ENCODE measurements at regions of chr1 and their contacts with region 1.

Region 1: GRCh38 chr1:81549604-81550127 is 251.1 kb upstream of the ADGRL2 start:
- DNase-seq: no peak
- ATAC-seq: peak; percentile 58 to 88 (median 70)
- H3K4me3 ChIP-seq: no peak overlapping the region
- H3K27ac ChIP-seq: no peak overlapping the region
- H3K4me1 ChIP-seq: peaks cover 0 to 20% (median 0%) of the 10 kb centered on the region in 12 donors
- H3K27me3 ChIP-seq: no peaks in the 10 kb centered on the region
- CTCF ChIP-seq: peak; percentile 28 to 64 (median 50)
- POLR2A ChIP-seq: no peak

Region 2: GRCh38 chr1:81305997-81306452 is 243.6 kb before region 1 on chr1:
- intact Hi-C with region 1: loop called in 2 of 10 experiments (anchors 5 to 10 kb)
- DNase-seq: peak in 3 of 5 donors; percentile 19 to 30 (median 25)
- ATAC-seq: peak; percentile 89 to 91 (median 90)
- H3K4me3 ChIP-seq: peak overlapping the region; percentile 33 to 76 (median 54)
- H3K27ac ChIP-seq: peak overlapping the region in 8 of 12 donors; percentile 11 to 71 (median 44)
- H3K4me1 ChIP-seq: peaks cover 0 to 9% (median 0%) of the 10 kb centered on the region in 12 donors
- H3K27me3 ChIP-seq: no peaks in the 10 kb centered on the region
- CTCF ChIP-seq: peak in 11 of 12 donors; percentile 18 to 69 (median 54)
- POLR2A ChIP-seq: no peak

Region 3: GRCh38 chr1:81437649-81438048 is 112.0 kb before region 1 on chr1:
- intact Hi-C with region 1: loop called in 2 of 10 experiments (anchors 10 kb)
- DNase-seq: no peak
- ATAC-seq: peak in 3 of 4 donors; percentile 23 to 47 (median 35)
- H3K4me3 ChIP-seq: peak overlapping the region in 1 of 12 donors; percentile 2
- H3K27ac ChIP-seq: peak overlapping the region in 9 of 12 donors; percentile 3 to 57 (median 37)
- H3K4me1 ChIP-seq: peaks cover 0 to 35% (median 15%) of the 10 kb centered on the region in 12 donors
- H3K27me3 ChIP-seq: no peaks in the 10 kb centered on the region
- CTCF ChIP-seq: no peak
- POLR2A ChIP-seq: no peak

Region 4: GRCh38 chr1:81606656-81607055 is 57.0 kb after region 1 on chr1:
- intact Hi-C with region 1: no loop called
- DNase-seq: no peak
- ATAC-seq: no peak
- H3K4me3 ChIP-seq: no peak overlapping the region
- H3K27ac ChIP-seq: no peak overlapping the region
- H3K4me1 ChIP-seq: no peaks in the 10 kb centered on the region
- H3K27me3 ChIP-seq: no peaks in the 10 kb centered on the region
- CTCF ChIP-seq: no peak
- POLR2A ChIP-seq: no peak

Region 5: GRCh38 chr1:81731989-81732388 is 182.3 kb after region 1 on chr1:
- intact Hi-C with region 1: loop called in 1 of 10 experiments (anchors 10 kb)
- DNase-seq: no peak
- ATAC-seq: peak in 3 of 4 donors; percentile 60 to 80 (median 64)
- H3K4me3 ChIP-seq: no peak overlapping the region
- H3K27ac ChIP-seq: no peak overlapping the region
- H3K4me1 ChIP-seq: peaks cover 0 to 6% (median 0%) of the 10 kb centered on the region in 12 donors
- H3K27me3 ChIP-seq: no peaks in the 10 kb centered on the region
- CTCF ChIP-seq: no peak
- POLR2A ChIP-seq: no peak

Region 6: DNA sequence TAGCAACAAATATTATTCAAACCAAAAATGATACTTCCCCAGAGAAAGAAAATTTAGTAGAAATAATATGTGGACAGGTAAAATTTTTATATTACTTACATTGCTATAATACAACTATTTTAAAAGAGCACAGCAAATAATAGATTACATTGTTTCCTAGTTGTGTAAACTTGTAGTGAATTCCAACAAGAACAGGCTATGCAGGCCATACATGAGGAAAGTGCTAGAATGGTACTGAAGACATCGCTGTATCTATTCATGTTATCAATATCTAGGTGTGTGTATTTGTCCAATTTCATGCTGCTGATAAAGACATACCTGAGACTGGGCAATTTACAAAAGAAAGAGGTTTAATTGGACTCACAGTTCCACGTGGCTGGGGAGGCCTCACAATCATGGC is 203.2 kb after region 1 on chr1:
- intact Hi-C with region 1: loop called in 5 of 10 experiments (anchors 2 to 10 kb)
- DNase-seq: no peak
- ATAC-seq: no peak
- H3K4me3 ChIP-seq: no peak overlapping the region
- H3K27ac ChIP-seq: no peak overlapping the region
- H3K4me1 ChIP-seq: peaks cover 0 to 8% (median 0%) of the 10 kb centered on the region in 12 donors
- H3K27me3 ChIP-seq: no peaks in the 10 kb centered on the region
- CTCF ChIP-seq: no peak
- POLR2A ChIP-seq: no peak

Region 7: GRCh38 chr1:81760477-81761097 is 210.9 kb after region 1 on chr1:
- intact Hi-C with region 1: loop called in 4 of 10 experiments (anchors 2 to 10 kb)
- DNase-seq: no peak
- ATAC-seq: no peak
- H3K4me3 ChIP-seq: no peak overlapping the region
- H3K27ac ChIP-seq: no peak overlapping the region
- H3K4me1 ChIP-seq: peaks cover 0 to 15% (median 3%) of the 10 kb centered on the region in 12 donors
- H3K27me3 ChIP-seq: no peaks in the 10 kb centered on the region
- CTCF ChIP-seq: peak in 10 of 12 donors; percentile 17 to 63 (median 54)
- POLR2A ChIP-seq: no peak

Region 8: DNA sequence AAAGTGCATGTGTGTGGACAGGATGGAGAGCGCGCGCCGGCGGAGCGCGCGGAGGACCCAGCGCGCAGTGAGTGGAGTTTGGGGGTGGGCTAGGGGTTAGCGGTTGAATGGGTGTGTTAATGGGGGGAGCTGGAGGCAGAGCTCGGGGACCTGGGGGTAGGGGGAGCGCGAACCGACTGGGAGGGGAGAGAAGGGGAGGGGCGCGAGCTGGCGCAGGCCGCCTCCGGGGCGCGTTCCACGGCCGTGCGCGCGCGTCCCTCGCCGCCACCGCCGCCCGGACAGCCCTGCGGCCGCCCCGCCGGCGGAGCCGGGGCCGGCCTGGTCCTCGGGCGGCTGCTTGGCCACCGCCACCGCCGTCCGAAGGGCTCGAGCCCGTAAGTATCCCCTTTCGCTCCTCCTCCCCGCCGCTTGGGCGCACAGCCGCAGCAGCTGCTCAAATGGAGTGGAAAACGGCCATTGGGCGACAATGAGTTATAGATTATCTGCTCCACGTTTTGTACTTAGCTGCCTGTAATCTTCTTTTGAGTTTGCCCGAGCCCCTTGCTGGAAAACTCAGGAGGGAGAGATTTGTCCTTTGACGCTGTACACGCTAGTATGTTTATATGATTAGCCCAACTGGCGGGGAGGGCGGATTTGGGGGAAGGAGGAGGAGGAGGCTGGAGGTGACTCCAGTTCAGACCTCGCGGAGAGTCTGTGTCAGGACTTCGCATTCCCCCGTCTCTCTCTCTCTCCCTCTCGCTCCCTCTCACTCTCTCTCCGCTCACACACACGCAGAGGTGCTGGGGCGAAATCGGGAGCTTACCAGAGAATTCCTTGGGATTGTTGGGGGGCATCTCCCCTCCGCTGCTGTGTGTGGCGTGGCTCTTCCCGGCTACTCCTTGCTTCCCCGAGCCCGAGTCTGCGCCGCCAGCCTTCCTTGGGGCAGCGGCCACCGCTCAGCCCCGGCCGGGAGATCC is 251.3 kb after region 1 on chr1 and contains the start of gene ADGRL2:
- intact Hi-C with region 1: loop called in 1 of 10 experiments (anchors 5 kb)
- DNase-seq: peak; percentile 77 to 89 (median 88)
- ATAC-seq: peak; percentile 86 to 91 (median 89)
- H3K4me3 ChIP-seq: peak within 1 kb of the TSS; percentile 65 to 98 (median 92)
- H3K27ac ChIP-seq: peak within 1 kb of the TSS; percentile 96 to 98 (median 98)
- H3K4me1 ChIP-seq: peaks cover 0 to 29% (median 17%) of the 10 kb centered on the region in 12 donors
- H3K27me3 ChIP-seq: peaks cover 0 to 25% (median 0%) of the 10 kb centered on the region in 9 donors
- CTCF ChIP-seq: no peak
- POLR2A ChIP-seq: peak in 1 of 2 donors; percentile 59
- total RNA-seq, gene ADGRL2: 49.7 to 82.8 (median 58.4) TPM

Measured in heart left ventricle (tissue), 16 donors.